ENCODE measurements at regions of chr5 and their contacts with region 1.

Region 1: GRCh38 chr5:99248066-99248465 is 319.3 kb upstream of the CHD1 start:
- DNase-seq: no peak
- H3K4me3 ChIP-seq: no peak overlapping the region
- H3K27ac ChIP-seq: no peak overlapping the region
- H3K4me1 ChIP-seq: no peaks in the 10 kb centered on the region
- H3K27me3 ChIP-seq: no peaks in the 10 kb centered on the region

Region 2: DNA sequence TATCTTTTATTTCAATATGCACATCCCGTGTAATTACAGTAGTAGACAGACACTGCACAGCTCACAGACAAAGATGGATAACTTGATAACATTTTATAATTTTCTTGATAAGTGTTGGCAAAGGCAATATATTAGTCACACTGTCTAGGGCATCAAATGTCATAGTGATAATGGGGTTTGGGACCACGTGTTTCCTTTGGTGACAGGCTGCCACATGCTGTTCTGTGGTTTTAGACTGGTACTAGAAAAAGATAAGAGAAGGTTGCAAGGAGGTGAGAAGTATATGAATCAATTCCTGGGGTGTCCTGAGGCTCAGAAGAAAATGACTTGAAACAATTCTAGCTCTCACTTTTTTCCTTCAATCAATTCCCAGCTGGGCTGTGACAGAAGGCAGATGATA is 60.5 kb before region 1 on chr5:
- in situ Hi-C with region 1: loop called (anchors 10 kb)
- DNase-seq: no peak
- H3K4me3 ChIP-seq: no peak overlapping the region
- H3K27ac ChIP-seq: no peak overlapping the region
- H3K4me1 ChIP-seq: no peaks in the 10 kb centered on the region
- H3K27me3 ChIP-seq: no peaks in the 10 kb centered on the region